Mammary epithelial cell (primary cell): ENCODE measurements at regions of chr12 and their contacts with region 1.

Region 1: GRCh38 chr12:97716356-97716755 is 253.8 kb downstream of the RMST start:
- DNase-seq: peak; percentile 19
- H3K4me3 ChIP-seq: no peak overlapping the region
- H3K27ac ChIP-seq: no peak overlapping the region
- H3K4me1 ChIP-seq: no peaks in the 10 kb centered on the region
- H3K27me3 ChIP-seq: no peaks in the 10 kb centered on the region
- CTCF ChIP-seq: peak; percentile 42 to 61

Region 2: DNA sequence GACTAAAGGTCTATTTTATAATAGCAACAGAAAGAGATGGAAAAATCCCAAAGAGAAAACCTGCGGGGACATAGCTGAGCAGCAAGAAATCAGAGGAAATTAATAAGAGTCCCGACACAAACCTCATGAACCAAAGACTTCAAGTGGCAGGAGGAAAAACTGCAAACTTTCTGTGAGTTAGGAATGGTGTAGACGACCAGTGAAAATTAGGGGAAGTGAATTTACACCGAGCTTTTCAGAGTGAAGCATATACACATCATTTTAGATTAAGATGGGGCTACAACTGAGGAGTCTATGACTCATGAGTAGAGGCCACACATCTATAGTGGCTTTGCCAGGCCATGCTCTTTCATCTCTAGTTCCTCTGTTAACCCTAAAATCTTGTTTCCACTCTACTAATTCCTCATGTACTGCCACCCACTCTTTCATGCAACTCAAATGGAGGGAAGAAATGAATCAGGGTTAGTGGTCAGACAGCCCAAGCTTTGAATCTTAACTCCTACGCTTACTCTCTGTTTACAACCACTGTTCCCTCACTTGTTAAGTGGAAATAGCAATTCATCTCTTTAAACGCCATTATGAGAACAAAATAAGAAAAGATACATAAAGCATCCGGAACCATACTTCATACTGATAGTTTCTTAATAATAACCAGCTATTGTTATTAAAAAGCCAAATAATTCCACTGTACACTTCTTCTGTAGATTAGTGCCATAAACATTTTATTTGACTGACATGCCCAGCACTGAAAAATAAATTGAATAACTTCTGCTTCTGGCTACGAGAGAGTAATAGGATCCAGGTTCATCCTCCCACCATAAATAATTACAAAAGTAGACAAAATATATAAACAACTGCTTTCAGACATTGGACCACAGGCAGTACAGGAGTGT is 34.5 kb before region 1 on chr12:
- CTCF ChIA-PET with region 1: no interaction called
- dilution Hi-C with region 1: no loop called
- in situ Hi-C with region 1: no loop called
- intact Hi-C with region 1: no loop called
- DNase-seq: no peak
- H3K4me3 ChIP-seq: no peak overlapping the region
- H3K27ac ChIP-seq: no peak overlapping the region
- H3K4me1 ChIP-seq: no peaks in the 10 kb centered on the region
- H3K27me3 ChIP-seq: no peaks in the 10 kb centered on the region
- CTCF ChIP-seq: no peak

Region 3: GRCh38 chr12:97943364-97943763 is 227.0 kb after region 1 on chr12:
- CTCF ChIA-PET with region 1: no interaction called
- dilution Hi-C with region 1: no loop called
- in situ Hi-C with region 1: no loop called
- intact Hi-C with region 1: loop called (anchors 5 kb)
- DNase-seq: peak; percentile 27
- H3K4me3 ChIP-seq: no peak overlapping the region
- H3K27ac ChIP-seq: no peak overlapping the region
- H3K4me1 ChIP-seq: peaks cover 40% of the 10 kb centered on the region
- H3K27me3 ChIP-seq: no peaks in the 10 kb centered on the region
- CTCF ChIP-seq: peak; percentile 23 to 39

Region 4: DNA sequence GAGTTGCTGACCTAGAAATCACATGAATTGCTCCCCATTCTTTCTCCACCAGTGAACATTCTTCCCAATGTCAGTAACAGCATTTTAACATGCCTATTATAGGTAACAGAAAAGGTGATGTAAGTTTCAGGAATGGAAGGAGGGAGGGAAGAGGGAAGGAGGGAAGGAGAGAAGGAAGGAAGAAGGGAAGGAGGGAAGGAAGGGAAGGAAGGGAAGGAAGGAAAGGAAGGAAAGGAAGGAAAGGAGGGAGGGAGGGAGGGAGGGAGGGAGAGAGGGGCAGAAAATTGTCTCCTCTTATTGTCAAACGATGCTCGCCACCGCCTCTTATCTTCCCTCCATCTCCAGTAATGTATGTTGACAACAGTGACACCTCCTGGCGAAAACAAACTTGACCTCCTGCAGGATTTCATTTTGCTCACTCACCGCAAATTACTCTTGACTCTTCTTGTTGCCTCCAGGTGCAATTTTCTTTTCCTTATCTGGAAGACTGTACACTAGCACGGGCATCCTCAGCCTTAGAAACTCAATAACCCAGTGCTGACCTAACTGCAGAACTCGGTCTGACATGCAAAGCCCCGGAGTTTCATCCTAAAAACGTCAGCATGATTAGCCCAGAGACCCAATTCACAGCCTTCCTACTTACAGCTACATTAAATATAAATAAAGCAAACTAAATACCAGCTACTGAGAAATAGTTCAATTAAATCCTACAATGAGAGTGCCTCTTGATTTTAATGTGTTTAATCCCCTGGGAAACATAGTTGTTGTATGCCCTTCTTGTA is 286.5 kb after region 1 on chr12:
- CTCF ChIA-PET with region 1: interaction called, 3 read pairs
- dilution Hi-C with region 1: no loop called
- in situ Hi-C with region 1: no loop called
- intact Hi-C with region 1: loop called (anchors 2 kb)
- DNase-seq: peak; percentile 48
- H3K4me3 ChIP-seq: no peak overlapping the region
- H3K27ac ChIP-seq: no peak overlapping the region
- H3K4me1 ChIP-seq: no peaks in the 10 kb centered on the region
- H3K27me3 ChIP-seq: no peaks in the 10 kb centered on the region
- CTCF ChIP-seq: peak; percentile 59 to 66

Region 5: GRCh38 chr12:98137278-98137677 is 420.9 kb after region 1 on chr12:
- CTCF ChIA-PET with region 1: no interaction called
- dilution Hi-C with region 1: no loop called
- in situ Hi-C with region 1: no loop called
- intact Hi-C with region 1: no loop called
- DNase-seq: no peak
- H3K4me3 ChIP-seq: no peak overlapping the region
- H3K27ac ChIP-seq: no peak overlapping the region
- H3K4me1 ChIP-seq: no peaks in the 10 kb centered on the region
- H3K27me3 ChIP-seq: peaks cover 3% of the 10 kb centered on the region
- CTCF ChIP-seq: no peak